Right ventricle myocardium inferior (tissue), 1 donor: ENCODE measurements at regions of chrX and their contacts with region 1.

Region 1: GRCh38 chrX:318739-319578 is at the start of gene GTPBP6:
- DNase-seq: peak; percentile 100
- ATAC-seq: peak; percentile 95
- total RNA-seq, gene GTPBP6: 51.4 TPM

Region 2: DNA sequence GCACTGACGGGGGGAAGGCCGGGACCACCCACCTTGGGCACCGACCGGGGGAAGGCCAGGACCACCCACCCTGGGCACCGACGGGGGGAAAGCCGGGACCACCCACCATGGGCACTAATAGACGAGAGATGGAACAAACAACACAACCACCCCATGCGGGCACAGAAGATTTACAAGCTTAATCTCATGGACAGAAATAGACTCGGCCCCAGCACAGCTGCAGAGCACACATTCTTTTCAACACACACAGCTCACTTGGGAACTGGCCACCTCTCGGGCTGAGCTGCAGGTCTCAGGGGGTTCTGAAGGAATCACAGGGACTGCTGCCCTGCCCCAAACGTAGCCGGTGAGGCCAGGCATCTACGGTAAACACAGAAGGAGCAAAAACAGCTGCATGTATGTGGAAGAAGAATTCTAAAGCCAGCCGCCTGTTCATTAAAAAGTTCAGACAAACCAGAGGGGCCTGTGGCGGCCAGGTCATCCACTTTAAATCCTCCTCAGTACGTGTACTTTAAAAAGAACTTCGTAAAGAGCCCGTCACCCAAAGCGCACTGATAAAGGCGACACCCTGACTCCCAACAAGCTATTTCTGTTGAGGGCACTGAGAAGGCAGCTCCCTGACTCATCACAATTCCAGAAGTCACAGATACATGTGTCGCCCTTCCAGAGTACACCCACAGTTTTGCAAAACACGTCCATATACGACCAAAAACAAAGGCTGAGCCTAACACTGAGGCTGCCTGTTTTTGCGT is 50.0 kb after region 1 on chrX:
- intact Hi-C with region 1: loop called (anchors 2 kb)
- DNase-seq: peak; percentile 66
- ATAC-seq: peak; percentile 76

Region 3: GRCh38 chrX:386768-387575 is 68.0 kb after region 1 on chrX and contains the start of gene PPP2R3B:
- intact Hi-C with region 1: loop called (anchors 5 kb)
- DNase-seq: peak; percentile 99
- ATAC-seq: peak; percentile 100
- total RNA-seq, gene PPP2R3B: 164 TPM

Region 4: DNA sequence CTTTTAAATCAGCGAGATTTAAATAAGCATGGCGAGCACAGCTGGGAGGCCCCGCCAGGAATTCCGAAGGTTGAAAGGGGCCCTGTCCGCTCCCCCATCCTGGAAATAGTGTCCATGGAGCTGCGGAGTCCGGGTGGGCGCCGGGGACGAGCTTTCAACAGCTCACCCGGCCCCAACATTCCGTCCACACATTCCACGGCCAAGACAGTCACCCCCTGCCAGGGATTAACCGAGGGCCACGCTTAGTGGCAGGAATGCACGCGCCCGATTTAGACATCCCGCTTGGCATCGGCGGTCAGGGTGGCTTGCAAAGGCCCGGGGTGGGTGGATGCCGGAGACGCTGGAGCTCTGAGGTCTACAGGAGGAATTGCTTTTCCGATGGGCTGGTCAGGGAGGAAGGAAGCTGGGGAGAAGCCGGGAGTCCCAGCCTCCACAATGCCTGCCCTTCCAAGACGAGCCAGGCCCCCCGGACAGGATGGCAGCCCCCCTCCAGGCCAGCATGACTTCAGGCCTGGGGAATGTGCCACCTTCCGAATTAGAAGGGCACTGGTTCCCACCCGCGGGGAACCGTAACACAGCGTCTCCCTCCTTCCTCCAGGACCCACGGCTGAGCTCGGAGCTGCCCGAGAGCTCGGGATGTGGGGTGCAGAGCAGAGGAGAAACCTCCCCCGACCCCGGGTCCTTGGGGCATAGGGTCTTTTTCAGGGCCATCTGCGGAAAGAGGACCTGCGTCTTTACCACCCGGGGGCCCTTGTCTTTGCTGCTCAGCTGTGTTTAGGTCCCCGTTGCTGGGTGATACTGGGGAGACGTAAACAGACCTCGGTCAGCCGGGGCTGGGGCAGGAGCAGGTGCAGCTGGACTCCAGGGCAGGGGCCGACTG is 94.6 kb after region 1 on chrX:
- intact Hi-C with region 1: loop called (anchors 5 kb)
- DNase-seq: peak; percentile 89
- ATAC-seq: peak; percentile 93